GM23248 (cell line): ENCODE measurements at regions of chr5 and their contacts with region 1.

Region 1: GRCh38 chr5:72355706-72356299 is 35.6 kb downstream of the PTCD2 start:
- DNase-seq: peak; percentile 53
- H3K4me3 ChIP-seq: no peak overlapping the region
- H3K27ac ChIP-seq: no peak overlapping the region
- H3K4me1 ChIP-seq: peaks cover 16% of the 10 kb centered on the region
- H3K27me3 ChIP-seq: no peaks in the 10 kb centered on the region

Region 2: DNA sequence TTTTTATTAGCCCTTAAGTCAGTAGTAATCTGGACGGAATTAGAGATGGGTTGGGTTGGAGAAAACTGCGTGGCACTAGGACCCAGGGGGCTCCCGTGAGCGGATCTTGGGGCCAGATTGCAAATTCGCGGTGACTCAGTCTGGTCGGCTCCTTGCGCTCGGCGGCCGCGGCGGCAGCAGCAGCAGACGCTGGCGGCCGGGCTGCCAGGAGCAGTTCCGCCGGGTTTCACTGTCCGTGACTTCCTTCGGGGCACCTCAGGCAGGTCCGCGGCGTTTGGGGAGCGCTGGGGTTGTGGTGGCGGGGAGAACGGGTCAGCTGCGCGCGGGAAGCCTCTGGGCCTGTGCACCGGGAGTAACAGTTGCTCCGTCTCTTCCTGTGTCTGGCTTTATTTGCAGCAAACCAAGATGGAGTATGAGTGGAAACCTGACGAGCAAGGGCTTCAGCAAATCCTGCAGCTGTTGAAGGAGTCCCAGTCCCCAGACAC is 492.2 kb after region 1 on chr5:
- in situ Hi-C with region 1: loop called (anchors 10 kb)
- DNase-seq: peak; percentile 98
- H3K4me3 ChIP-seq: peak overlapping the region; percentile 83
- H3K27ac ChIP-seq: peak overlapping the region; percentile 81
- H3K4me1 ChIP-seq: peaks cover 65% of the 10 kb centered on the region
- H3K27me3 ChIP-seq: no peaks in the 10 kb centered on the region